CD8-positive, alpha-beta T cell (primary cell): ENCODE measurements at regions of chr3 and their contacts with region 1.

Region 1: GRCh38 chr3:192802957-192803899 is 75.9 kb upstream of the FGF12 start:
- DNase-seq: peak in 1 of 9 experiments; percentile 10
- ATAC-seq: no peak
- H3K4me3 ChIP-seq: no peak overlapping the region
- H3K4me3 Mint-ChIP-seq: no peak overlapping the region
- H3K27ac ChIP-seq: no peak overlapping the region
- H3K27ac Mint-ChIP-seq: no peak overlapping the region
- H3K4me1 ChIP-seq: no peaks in the 10 kb centered on the region
- H3K4me1 Mint-ChIP-seq: no peaks in the 10 kb centered on the region
- H3K27me3 ChIP-seq: no peaks in the 10 kb centered on the region
- H3K27me3 Mint-ChIP-seq: peaks cover 2% of the 10 kb centered on the region
- CTCF ChIP-seq: peak; percentile 17

Region 2: DNA sequence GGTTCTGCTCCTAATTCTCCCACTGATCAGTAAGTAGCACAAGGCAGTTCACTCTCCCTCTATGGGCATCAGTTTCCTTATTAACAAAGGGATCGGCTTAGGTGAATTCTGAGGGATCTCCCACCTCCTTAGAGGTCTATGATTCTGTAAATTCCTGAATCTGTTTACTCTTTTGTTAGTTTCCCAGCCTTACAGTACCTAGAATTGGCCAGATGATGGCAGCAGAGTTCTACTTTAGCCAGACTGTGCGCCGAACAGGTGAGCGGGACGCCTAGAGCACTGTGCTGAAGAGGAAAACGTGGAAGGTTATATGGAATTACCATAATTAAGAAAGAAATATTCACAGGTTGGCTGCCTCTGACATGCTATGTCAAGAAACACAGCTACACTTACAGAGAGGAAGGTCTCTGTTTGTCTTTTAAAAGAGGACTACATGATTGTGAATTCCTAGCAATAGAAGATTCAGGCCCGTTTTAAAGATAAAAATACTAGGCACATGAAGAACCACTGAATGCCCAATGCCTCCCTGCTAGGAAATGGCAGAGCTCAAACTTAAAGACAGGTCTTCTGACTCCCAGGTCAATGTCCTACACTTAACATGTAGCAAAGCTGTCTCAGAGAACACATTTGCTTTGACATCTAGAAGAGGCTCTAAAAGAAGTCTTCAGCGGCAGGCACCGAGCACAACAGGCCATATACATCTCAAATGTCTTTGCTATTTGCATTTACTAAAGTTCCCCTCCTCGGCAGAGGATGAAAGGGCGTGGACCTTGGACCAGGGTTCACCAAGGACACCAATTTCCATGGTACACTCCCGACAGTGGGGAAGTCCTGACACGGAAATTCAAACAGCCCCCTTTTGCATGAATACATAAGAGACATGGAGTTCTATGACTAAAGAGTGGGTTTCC is 335.7 kb before region 1 on chr3:
- CTCF ChIA-PET with region 1: no interaction called
- POLR2A ChIA-PET with region 1: no interaction called
- intact Hi-C with region 1: loop called in 1 of 2 experiments (anchors 5 kb)
- DNase-seq: peak in 8 of 9 experiments; percentile 12 to 51 (median 36)
- ATAC-seq: peak; percentile 69
- H3K4me3 ChIP-seq: no peak overlapping the region
- H3K4me3 Mint-ChIP-seq: no peak overlapping the region
- H3K27ac ChIP-seq: no peak overlapping the region
- H3K27ac Mint-ChIP-seq: no peak overlapping the region
- H3K4me1 ChIP-seq: no peaks in the 10 kb centered on the region
- H3K4me1 Mint-ChIP-seq: no peaks in the 10 kb centered on the region
- H3K27me3 ChIP-seq: no peaks in the 10 kb centered on the region
- H3K27me3 Mint-ChIP-seq: peaks cover 15% of the 10 kb centered on the region
- CTCF ChIP-seq: peak; percentile 76

Region 3: DNA sequence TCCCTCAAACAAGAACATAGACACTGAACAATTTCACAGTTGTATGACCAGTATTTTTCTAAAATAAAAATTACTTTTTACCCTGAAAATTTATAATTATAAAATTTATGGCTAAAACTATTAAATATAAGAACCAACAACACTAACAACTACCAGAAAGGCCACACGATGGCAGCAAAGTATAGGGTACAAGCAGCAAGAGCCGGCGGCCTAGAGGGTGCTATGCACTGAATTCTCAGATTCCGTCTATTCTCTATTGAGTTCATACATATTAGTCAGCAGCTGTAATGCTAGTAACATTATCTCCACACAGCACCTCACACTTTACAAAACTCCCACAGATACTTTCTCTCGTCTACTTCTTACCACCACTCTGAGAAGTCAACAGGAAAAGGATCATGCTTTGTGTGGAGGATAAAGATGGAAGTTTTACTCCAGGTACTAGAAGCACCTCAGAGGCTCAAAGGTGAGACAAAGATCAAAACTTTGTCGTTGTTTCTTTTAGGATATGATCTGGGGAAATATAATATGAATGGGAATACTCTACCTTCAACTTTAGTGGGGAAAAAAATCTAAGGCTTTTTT is 236.4 kb before region 1 on chr3:
- CTCF ChIA-PET with region 1: no interaction called
- POLR2A ChIA-PET with region 1: no interaction called
- intact Hi-C with region 1: loop called in 1 of 2 experiments (anchors 5 kb)
- DNase-seq: peak in 8 of 9 experiments; percentile 9 to 55 (median 42)
- ATAC-seq: no peak
- H3K4me3 ChIP-seq: no peak overlapping the region
- H3K4me3 Mint-ChIP-seq: no peak overlapping the region
- H3K27ac ChIP-seq: no peak overlapping the region
- H3K27ac Mint-ChIP-seq: no peak overlapping the region
- H3K4me1 ChIP-seq: no peaks in the 10 kb centered on the region
- H3K4me1 Mint-ChIP-seq: peaks cover 2% of the 10 kb centered on the region
- H3K27me3 ChIP-seq: no peaks in the 10 kb centered on the region
- H3K27me3 Mint-ChIP-seq: peaks cover 2% of the 10 kb centered on the region
- CTCF ChIP-seq: peak; percentile 37

Region 4: GRCh38 chr3:192715126-192715525 is 88.1 kb before region 1 on chr3:
- CTCF ChIA-PET with region 1: no interaction called
- POLR2A ChIA-PET with region 1: no interaction called
- intact Hi-C with region 1: no loop called
- DNase-seq: no peak
- ATAC-seq: no peak
- H3K4me3 ChIP-seq: no peak overlapping the region
- H3K4me3 Mint-ChIP-seq: no peak overlapping the region
- H3K27ac ChIP-seq: no peak overlapping the region
- H3K27ac Mint-ChIP-seq: no peak overlapping the region
- H3K4me1 ChIP-seq: no peaks in the 10 kb centered on the region
- H3K4me1 Mint-ChIP-seq: no peaks in the 10 kb centered on the region
- H3K27me3 ChIP-seq: no peaks in the 10 kb centered on the region
- H3K27me3 Mint-ChIP-seq: no peaks in the 10 kb centered on the region
- CTCF ChIP-seq: no peak